Endothelial cell of umbilical vein (primary cell): ENCODE measurements at regions of chr1 and their contacts with region 1.

Region 1: GRCh38 chr1:59759156-59759925 is 55.4 kb upstream of the HOOK1 start:
- DNase-seq: peak; percentile 85
- H3K4me3 ChIP-seq: no peak overlapping the region
- H3K27ac ChIP-seq: peak overlapping the region; percentile 44
- H3K4me1 ChIP-seq: peaks cover 5% of the 10 kb centered on the region
- H3K27me3 ChIP-seq: no peaks in the 10 kb centered on the region
- CTCF ChIP-seq: peak; percentile 86 to 92
- POLR2A ChIP-seq: no peak

Region 2: GRCh38 chr1:58515794-58516401 is 1243.4 kb before region 1 on chr1:
- CTCF ChIA-PET with region 1: interaction called, 25 read pairs
- POLR2A ChIA-PET with region 1: no interaction called
- dilution Hi-C with region 1: no loop called
- intact Hi-C with region 1: loop called (anchors 1 kb)
- DNase-seq: peak; percentile 71
- H3K4me3 ChIP-seq: no peak overlapping the region
- H3K27ac ChIP-seq: no peak overlapping the region
- H3K4me1 ChIP-seq: no peaks in the 10 kb centered on the region
- H3K27me3 ChIP-seq: no peaks in the 10 kb centered on the region
- CTCF ChIP-seq: peak; percentile 37 to 58
- POLR2A ChIP-seq: no peak

Region 3: GRCh38 chr1:58768971-58769808 is 990.2 kb before region 1 on chr1:
- CTCF ChIA-PET with region 1: interaction called, 13 read pairs
- POLR2A ChIA-PET with region 1: no interaction called
- dilution Hi-C with region 1: no loop called
- intact Hi-C with region 1: loop called (anchors 1 kb)
- DNase-seq: peak; percentile 74
- H3K4me3 ChIP-seq: no peak overlapping the region
- H3K27ac ChIP-seq: no peak overlapping the region
- H3K4me1 ChIP-seq: peaks cover 34% of the 10 kb centered on the region
- H3K27me3 ChIP-seq: no peaks in the 10 kb centered on the region
- CTCF ChIP-seq: peak; percentile 71 to 81
- POLR2A ChIP-seq: no peak

Region 4: GRCh38 chr1:59296358-59297256 is 462.7 kb before region 1 on chr1 and contains the start of gene FGGY:
- CTCF ChIA-PET with region 1: interaction called, 12 read pairs
- POLR2A ChIA-PET with region 1: no interaction called
- dilution Hi-C with region 1: no loop called
- intact Hi-C with region 1: loop called (anchors 1 kb)
- DNase-seq: peak; percentile 99
- H3K4me3 ChIP-seq: peak within 1 kb of the TSS; percentile 36 to 81 (median 64)
- H3K27ac ChIP-seq: peak within 1 kb of the TSS; percentile 92
- H3K4me1 ChIP-seq: peaks cover 30% of the 10 kb centered on the region
- H3K27me3 ChIP-seq: no peaks in the 10 kb centered on the region
- CTCF ChIP-seq: no peak
- POLR2A ChIP-seq: peak; percentile 95
- total RNA-seq, gene FGGY: 5.6 and 8.3 TPM in 2 replicates

Region 5: GRCh38 chr1:59707178-59707791 is 52.1 kb before region 1 on chr1:
- CTCF ChIA-PET with region 1: interaction called, 18 read pairs
- POLR2A ChIA-PET with region 1: no interaction called
- dilution Hi-C with region 1: no loop called
- intact Hi-C with region 1: loop called (anchors 2 kb)
- DNase-seq: peak; percentile 86
- H3K4me3 ChIP-seq: no peak overlapping the region
- H3K27ac ChIP-seq: no peak overlapping the region
- H3K4me1 ChIP-seq: peaks cover 12% of the 10 kb centered on the region
- H3K27me3 ChIP-seq: no peaks in the 10 kb centered on the region
- CTCF ChIP-seq: no peak
- POLR2A ChIP-seq: no peak

Region 6: DNA sequence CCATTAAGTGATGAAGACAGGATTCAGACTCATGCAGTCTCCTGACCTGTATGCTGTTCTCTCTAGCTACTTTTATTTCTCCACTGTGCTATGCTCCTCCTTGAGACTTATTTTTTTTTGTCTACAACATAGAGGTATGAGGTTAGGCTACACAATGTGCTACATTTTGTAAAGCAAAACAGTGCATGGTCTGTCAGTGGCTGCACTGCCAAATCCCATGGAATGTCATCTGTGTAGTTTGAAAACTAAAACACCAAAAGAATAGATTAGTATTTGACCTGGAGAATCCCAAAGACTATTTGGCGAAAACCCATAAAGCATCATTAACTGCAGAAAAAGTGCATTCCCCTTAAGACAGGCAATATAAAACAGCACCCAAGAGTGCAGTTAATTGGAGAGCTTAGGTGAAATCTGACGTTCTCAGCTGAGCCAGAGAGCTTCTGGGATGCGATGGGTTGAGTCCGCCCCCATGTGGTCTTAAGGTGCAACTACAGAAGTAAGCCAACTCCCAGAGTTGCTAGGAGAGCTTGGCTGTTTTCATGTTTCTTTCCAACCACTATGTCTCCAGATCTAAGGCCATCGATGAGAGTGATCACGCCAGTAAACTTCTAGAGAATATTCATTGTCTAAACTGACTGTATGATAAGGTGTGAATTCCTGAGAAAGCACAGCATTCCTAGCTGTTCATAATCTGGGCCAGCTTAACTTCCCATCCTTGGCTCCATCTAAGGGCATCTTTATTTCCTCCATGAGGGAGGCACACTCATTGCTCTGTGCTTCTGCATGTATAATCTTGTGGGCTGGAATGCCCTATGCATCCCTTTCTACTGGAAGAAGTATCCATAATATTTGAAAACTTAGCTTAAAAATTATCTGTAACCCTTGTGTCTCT is 188.0 kb after region 1 on chr1:
- CTCF ChIA-PET with region 1: interaction called, 16 read pairs
- POLR2A ChIA-PET with region 1: no interaction called
- dilution Hi-C with region 1: no loop called
- intact Hi-C with region 1: no loop called
- DNase-seq: peak; percentile 67
- H3K4me3 ChIP-seq: no peak overlapping the region
- H3K27ac ChIP-seq: no peak overlapping the region
- H3K4me1 ChIP-seq: no peaks in the 10 kb centered on the region
- H3K27me3 ChIP-seq: peaks cover 0 to 10% of the 10 kb centered on the region in 2 experiments
- CTCF ChIP-seq: peak; percentile 84 to 85
- POLR2A ChIP-seq: no peak